HEK293 (cell line): ENCODE measurements at regions of chr11 and their contacts with region 1.

Region 1: DNA sequence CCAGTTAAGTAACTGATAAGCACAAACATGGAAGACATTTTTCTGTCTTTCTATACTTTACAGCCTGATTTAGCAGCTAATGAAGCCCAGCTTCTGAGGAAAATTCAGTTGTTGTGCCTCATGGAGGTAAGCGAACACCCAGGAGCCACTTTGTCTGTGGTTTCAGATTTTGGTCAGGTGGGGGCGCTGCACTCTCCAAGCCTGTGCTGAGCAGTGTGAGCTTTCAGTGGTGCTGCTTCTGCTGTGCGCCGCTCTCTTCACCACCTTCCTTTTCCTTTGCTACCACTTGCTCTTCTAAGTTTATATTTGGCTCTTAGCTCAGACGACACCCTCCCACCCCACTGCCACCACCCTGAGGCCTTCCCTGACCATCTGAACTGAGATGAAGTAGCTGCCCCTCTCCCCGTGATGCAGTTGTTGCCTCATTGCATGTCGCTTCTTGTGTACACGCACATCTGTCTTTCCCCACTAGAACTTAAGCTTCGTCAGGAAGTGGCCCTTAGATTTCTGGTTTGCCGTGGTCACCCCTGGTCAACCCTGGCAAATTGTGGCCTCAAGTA is 14.0 kb downstream of the PSMD13 start:
- H3K4me3 ChIP-seq: no peak overlapping the region
- H3K27ac ChIP-seq: no peak overlapping the region
- H3K4me1 ChIP-seq: no peaks in the 10 kb centered on the region
- CTCF ChIP-seq: no peak

Region 2: DNA sequence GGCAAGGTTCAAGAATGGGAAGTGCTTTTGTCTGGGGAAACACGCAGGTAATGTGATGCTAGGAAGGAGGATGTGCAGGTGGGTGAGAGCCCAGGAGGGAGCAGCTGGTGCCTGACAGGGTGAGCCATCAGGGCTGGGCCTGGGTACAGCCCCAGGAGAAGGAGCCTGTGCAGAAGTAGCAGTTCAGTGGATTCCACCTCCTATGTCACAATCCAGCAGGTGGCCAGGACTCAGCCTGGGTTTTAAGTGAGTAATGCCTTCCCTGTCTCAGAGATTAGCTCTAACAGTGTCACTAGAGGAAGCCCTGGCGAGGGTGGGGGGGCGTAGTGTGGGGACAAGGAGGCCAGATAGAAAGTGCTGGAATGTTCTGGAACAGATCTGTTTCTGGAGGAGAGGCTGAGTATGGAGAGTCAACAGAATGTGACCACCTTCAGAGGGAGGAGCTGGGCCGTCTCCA is 35.2 kb before region 1 on chr11:
- CTCF ChIA-PET with region 1: interaction called, 10 read pairs
- POLR2A ChIA-PET with region 1: interaction called, 3 read pairs
- H3K4me3 ChIP-seq: no peak overlapping the region
- H3K27ac ChIP-seq: no peak overlapping the region
- H3K4me1 ChIP-seq: no peaks in the 10 kb centered on the region
- CTCF ChIP-seq: no peak

Region 3: DNA sequence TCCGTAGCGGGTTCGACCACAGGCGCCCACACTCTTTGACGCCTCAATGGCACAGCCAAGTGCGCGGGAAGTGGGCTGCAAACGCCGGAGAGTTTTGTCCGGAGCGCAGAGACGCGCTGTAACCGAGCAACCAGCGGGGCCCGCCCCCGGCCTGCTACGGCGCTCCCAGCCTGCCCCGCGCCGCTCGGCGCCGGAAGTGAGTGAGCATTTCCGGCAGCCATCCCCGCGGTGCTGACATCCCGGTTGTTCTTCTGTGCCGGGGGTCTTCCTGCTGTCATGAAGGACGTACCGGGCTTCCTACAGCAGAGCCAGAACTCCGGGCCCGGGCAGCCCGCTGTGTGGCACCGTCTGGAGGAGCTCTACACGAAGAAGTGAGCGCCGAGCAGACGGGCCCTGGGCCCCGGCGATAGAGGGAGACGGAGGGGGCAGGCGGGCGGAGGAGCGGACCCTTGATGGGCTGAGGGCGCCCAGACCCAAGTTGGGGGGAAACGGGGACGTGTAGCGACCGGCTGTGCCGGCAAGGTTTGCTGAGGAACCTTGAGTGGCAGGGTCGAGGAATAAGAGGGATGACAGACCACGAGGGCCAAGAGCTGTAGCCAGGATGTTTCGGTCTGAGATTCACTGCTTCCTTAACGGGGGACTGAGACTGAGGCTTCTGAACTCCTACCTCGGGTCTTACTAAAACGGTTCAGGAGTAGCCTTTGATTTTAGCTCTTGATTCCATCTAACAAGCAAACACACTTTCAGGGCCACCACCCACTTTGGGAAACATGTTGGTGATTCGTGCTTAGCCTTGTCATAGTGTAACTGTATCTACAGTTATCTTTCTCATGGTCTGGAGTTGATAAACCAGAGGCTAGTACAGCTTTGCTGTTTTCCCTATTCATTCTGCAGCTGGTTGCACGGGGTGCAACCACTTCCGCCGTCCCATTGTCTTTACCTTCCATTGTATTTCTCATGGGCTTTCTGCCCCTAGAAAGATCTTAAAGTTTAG is 13.7 kb before region 1 on chr11 and contains the start of gene PSMD13:
- CTCF ChIA-PET with region 1: interaction called, 35 read pairs
- POLR2A ChIA-PET with region 1: no interaction called
- H3K4me3 ChIP-seq: peak within 1 kb of the TSS; percentile 93
- H3K27ac ChIP-seq: peak within 1 kb of the TSS; percentile 36; the same call in 1 of the 2 replicates
- H3K4me1 ChIP-seq: no peaks in the 10 kb centered on the region
- CTCF ChIP-seq: no peak

Region 4: DNA sequence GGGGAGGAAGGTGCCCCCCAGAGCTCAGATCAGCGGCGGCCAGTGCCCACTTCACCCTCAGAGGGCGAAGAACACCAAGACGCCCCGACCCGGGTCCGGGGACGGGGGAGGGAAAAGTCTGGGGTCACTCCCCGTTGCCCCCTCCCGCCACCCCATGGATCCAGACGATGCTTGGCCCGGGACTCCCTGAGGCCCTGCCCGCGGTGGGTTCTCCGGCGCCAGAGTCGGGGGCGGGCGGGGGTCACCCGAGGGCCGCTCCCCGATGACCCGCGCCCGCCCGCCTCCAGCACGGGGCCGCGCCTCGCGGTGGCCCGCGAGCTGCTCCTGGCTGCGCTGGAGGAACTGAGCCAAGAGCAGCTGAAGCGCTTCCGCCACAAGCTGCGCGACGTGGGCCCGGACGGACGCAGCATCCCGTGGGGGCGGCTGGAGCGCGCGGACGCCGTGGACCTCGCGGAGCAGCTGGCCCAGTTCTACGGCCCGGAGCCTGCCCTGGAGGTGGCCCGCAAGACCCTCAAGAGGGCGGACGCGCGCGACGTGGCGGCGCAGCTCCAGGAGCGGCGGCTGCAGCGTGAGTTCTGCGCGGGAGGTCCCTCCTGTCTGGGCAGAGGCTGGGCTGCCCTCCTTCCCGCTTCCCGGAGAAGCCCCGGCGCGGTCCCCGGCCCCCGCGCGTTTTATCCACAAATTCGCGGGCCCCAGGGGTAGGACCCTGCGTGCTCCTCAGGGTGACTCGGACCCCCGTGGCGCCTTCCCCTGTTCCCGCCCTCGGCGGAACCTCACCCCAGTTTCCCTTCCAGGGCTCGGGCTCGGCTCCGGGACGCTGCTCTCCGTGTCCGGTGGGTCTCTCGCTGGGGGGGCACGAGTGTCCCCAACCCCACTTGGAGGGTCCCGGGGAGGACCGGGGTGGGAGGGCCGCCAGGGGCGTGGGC is 28.5 kb after region 1 on chr11:
- CTCF ChIA-PET with region 1: interaction called, 28 read pairs
- POLR2A ChIA-PET with region 1: no interaction called
- H3K4me3 ChIP-seq: no peak overlapping the region
- H3K27ac ChIP-seq: no peak overlapping the region
- H3K4me1 ChIP-seq: no peaks in the 10 kb centered on the region
- CTCF ChIP-seq: no peak

Region 5: GRCh38 chr11:304915-305843 is 54.4 kb after region 1 on chr11:
- CTCF ChIA-PET with region 1: interaction called, 30 read pairs
- POLR2A ChIA-PET with region 1: no interaction called
- H3K4me3 ChIP-seq: no peak overlapping the region
- H3K27ac ChIP-seq: no peak overlapping the region
- H3K4me1 ChIP-seq: no peaks in the 10 kb centered on the region
- CTCF ChIP-seq: no peak

Region 6: DNA sequence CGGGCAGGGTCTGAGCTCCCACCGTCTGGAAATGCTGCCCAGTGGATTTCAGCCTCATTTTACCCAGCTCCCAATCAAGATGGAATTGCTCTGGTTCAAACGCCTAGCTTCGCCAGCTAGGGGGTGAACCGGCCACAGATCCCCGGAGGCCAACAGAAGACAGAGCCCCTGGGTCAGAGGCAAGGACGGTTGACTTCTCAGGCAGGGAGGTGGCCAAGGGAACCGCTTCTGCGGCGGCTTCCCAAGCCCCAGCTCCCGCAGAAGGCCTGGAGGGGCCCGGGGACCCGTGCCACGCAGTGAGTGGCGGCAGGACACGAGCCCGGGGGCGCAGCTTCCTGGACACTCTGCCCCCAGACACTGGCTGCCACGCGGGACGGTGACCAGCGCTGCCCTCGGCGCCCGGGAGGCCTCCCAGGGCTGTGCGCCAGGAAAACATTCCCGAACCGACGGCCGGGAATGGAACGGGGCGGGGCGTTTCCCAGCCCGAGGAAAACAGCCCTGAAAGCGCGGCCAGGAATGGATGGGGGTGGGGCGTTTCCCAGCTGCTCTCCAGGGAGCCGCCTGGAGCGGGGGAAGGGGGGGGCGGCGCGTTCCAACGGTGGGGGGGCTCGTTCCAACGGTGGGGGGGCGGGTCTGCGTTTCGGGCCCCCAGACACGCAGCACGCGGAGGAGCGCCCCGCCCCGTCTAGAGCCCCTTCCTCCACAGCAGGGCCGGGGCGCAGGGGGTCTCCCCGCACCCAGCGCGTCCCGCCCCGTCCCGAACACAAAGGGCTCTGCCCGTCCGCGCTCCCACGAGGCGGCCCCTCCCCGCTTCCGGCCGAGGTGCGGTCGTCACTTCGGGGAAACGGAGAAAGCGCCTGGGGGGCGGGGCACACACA is 105.0 kb after region 1 on chr11:
- CTCF ChIA-PET with region 1: interaction called, 18 read pairs
- POLR2A ChIA-PET with region 1: no interaction called
- H3K4me3 ChIP-seq: peak overlapping the region; percentile 47
- H3K27ac ChIP-seq: peak overlapping the region; percentile 57; the same call in 1 of the 2 replicates
- H3K4me1 ChIP-seq: no peaks in the 10 kb centered on the region
- CTCF ChIP-seq: no peak

Region 7: DNA sequence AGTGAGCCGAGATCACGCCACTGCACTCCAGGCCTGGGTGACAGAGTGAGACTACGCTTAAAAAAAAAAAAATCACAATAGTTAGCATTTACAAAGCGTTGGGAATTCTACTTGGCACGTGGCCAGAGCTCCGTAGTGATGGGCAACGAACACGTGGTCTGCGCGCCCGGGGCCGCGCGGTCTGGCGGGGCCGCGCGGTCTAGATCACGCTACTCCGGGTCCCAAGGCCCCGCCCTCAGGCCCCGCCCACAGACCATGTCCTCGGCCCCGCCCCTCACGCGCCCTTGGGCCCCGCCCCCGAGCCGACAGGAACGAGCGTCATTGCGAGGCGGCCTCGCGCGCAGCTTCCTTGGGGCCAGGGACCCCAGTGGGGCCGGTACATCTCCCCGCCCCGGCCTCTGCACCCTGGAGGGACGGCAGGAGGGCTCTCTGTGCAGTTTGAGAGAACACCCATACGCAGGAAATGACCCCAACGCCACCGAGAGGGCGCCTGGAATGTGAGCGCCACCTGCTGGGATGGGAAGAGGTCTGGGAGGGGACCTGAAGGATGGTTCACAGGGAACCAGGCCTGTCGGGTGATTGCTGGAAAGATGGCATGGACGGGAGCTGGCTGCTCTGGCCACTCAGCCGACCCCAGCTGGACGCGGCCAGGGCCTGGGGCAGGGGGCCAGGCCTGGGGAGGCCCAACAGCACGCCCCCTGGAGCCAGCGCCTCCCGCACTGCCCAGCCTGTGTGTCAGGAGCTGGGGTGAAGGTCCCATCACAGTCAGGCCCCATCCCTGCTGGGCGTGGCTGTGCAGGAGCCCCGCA is 197.3 kb after region 1 on chr11:
- CTCF ChIA-PET with region 1: interaction called, 18 read pairs
- POLR2A ChIA-PET with region 1: no interaction called
- H3K4me3 ChIP-seq: peak overlapping the region; percentile 52
- H3K27ac ChIP-seq: peak overlapping the region; percentile 20; the same call in 1 of the 2 replicates
- H3K4me1 ChIP-seq: no peaks in the 10 kb centered on the region
- CTCF ChIP-seq: peak; percentile 96